AG04449 (cell line): ENCODE measurements at regions of chr14 and their contacts with region 1.

Region 1: DNA sequence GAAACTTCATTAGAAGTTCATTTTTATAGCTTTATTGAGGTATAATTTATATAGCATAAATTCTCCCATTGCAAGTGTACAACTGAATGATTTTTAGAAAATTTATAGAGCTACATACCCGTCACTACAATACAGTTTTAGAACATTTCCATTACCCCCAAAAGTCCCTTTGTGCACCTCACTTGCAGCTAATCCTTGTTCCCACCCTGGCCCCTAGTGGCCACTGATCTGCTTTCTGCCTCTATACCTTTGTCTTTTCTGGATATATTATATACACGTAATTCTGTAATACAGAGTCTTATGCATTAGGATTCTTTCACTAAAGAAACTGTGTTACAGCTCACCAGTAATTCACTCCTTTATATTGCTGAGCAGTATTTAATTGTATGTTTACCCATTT is 145.1 kb upstream of the DIO2 start:
- DNase-seq: no peak
- H3K4me3 ChIP-seq: no peak overlapping the region
- CTCF ChIP-seq: peak; percentile 57

Region 2: DNA sequence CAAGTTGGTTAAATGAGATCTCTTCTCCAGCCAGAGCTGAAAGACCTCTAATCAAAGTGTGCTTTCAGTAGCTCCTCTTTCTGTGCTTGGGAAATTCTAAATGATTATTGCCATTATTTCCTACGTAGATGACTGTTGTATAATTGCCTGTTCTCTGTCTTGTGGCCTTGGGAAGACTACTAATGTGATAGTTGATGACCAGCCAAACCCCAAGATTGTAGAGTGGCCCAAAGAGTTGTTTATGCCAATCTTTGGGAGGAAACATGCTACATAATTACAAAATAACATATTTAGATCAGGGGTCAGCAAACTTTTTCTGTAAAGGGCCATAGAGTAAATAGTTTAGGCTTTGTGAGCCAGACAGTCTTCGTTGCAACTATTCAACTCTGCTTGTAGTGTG is 10.0 kb before region 1 on chr14:
- CTCF ChIA-PET with region 1: interaction called, 19 read pairs
- POLR2A ChIA-PET with region 1: no interaction called
- DNase-seq: no peak
- H3K4me3 ChIP-seq: no peak overlapping the region
- CTCF ChIP-seq: no peak

Region 3: GRCh38 chr14:80414080-80414479 is 57.7 kb after region 1 on chr14:
- CTCF ChIA-PET with region 1: no interaction called
- POLR2A ChIA-PET with region 1: no interaction called
- DNase-seq: no peak
- H3K4me3 ChIP-seq: no peak overlapping the region
- CTCF ChIP-seq: no peak

Region 4: GRCh38 chr14:80664576-80664975 is 308.2 kb after region 1 on chr14:
- CTCF ChIA-PET with region 1: no interaction called
- POLR2A ChIA-PET with region 1: no interaction called
- DNase-seq: no peak
- H3K4me3 ChIP-seq: no peak overlapping the region
- CTCF ChIP-seq: no peak

Region 5: GRCh38 chr14:81256289-81256960 is 900.0 kb after region 1 on chr14:
- CTCF ChIA-PET with region 1: no interaction called
- POLR2A ChIA-PET with region 1: no interaction called
- DNase-seq: no peak
- H3K4me3 ChIP-seq: no peak overlapping the region
- CTCF ChIP-seq: no peak